HepG2 (cell line): ENCODE measurements at regions of chr14 and their contacts with region 1.

Region 1: GRCh38 chr14:93115069-93115820 is 480 bp downstream of the ITPK1 start:
- DNase-seq: peak; percentile 63
- ATAC-seq: peak; percentile 85
- H3K4me3 ChIP-seq: peak overlapping the region; percentile 81 to 92 (median 87)
- H3K27ac ChIP-seq: peak overlapping the region; percentile 66
- H3K4me1 ChIP-seq: peaks cover 38% of the 10 kb centered on the region
- H3K27me3 ChIP-seq: no peaks in the 10 kb centered on the region; a peak in 1 of 5 replicates
- CTCF ChIP-seq: peak; percentile 26; the same call in 1 of the 2 replicates
- EP300 ChIP-seq: no peak
- POLR2A ChIP-seq: peak in 1 of 2 experiments; percentile 27; a peak in 1 of 4 replicates
- RAD21 ChIP-seq: no peak

Region 2: GRCh38 chr14:92951912-92952471 is 163.3 kb before region 1 on chr14:
- CTCF ChIA-PET with region 1: interaction called, 6 read pairs
- POLR2A ChIA-PET with region 1: no interaction called
- in situ Hi-C with region 1: loop called (anchors 10 kb)
- intact Hi-C with region 1: loop called (anchors 1 kb)
- DNase-seq: peak; percentile 37
- ATAC-seq: peak; percentile 92
- H3K4me3 ChIP-seq: no peak overlapping the region
- H3K27ac ChIP-seq: no peak overlapping the region
- H3K4me1 ChIP-seq: no peaks in the 10 kb centered on the region
- H3K27me3 ChIP-seq: no peaks in the 10 kb centered on the region; a peak in 1 of 5 replicates
- CTCF ChIP-seq: peak; percentile 97
- EP300 ChIP-seq: no peak
- POLR2A ChIP-seq: no peak
- RAD21 ChIP-seq: peak; percentile 97

Region 3: DNA sequence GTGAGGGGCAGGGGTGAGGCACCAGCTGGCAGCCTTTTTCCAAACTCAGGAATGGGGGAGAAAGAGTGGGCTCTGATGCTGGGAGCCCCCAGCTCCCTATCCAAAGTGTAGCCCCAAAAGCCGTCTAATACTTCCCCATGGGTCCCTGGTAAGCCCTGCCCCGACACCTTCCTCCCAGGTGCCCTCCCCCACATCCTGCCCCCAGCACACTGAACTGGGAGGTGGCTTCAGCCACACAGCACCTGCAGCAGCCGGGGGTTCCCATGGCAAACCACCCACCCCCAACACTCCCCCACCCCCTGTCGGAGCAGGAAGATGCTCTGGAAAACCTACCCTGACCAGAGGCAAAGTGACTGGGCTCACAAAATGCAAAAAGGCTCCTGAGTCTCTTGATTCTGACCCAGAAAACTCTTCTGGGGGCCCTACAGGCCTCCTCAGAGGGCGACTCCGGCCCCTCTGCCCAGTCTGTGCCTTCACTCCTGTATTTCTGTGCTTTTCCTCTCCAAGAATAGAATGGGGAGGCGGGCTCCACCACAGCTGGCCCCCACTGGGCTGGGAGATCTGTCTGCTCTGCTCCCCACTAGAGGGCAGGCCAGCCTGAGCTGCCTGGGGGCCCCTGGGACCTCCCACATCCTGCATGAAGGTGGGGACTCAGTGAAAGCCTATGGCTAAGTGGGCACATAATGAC is 81.1 kb before region 1 on chr14:
- CTCF ChIA-PET with region 1: no interaction called
- POLR2A ChIA-PET with region 1: interaction called, 3 read pairs
- in situ Hi-C with region 1: no loop called
- intact Hi-C with region 1: loop called (anchors 10 kb)
- DNase-seq: no peak
- ATAC-seq: peak; percentile 27
- H3K4me3 ChIP-seq: no peak overlapping the region
- H3K27ac ChIP-seq: no peak overlapping the region
- H3K4me1 ChIP-seq: peaks cover 82% of the 10 kb centered on the region
- H3K27me3 ChIP-seq: no peaks in the 10 kb centered on the region
- CTCF ChIP-seq: peak; percentile 70
- EP300 ChIP-seq: no peak
- POLR2A ChIP-seq: no peak
- RAD21 ChIP-seq: peak; percentile 29; the same call in 1 of the 2 replicates

Region 4: GRCh38 chr14:93086441-93087055 is 28.7 kb before region 1 on chr14:
- CTCF ChIA-PET with region 1: no interaction called
- POLR2A ChIA-PET with region 1: no interaction called
- in situ Hi-C with region 1: no loop called
- intact Hi-C with region 1: no loop called
- DNase-seq: no peak
- ATAC-seq: no peak
- H3K4me3 ChIP-seq: no peak overlapping the region
- H3K27ac ChIP-seq: no peak overlapping the region
- H3K4me1 ChIP-seq: peaks cover 21% of the 10 kb centered on the region
- H3K27me3 ChIP-seq: no peaks in the 10 kb centered on the region
- CTCF ChIP-seq: no peak
- EP300 ChIP-seq: no peak
- POLR2A ChIP-seq: no peak
- RAD21 ChIP-seq: no peak

Region 5: GRCh38 chr14:93137864-93138263 is 22.6 kb after region 1 on chr14:
- CTCF ChIA-PET with region 1: interaction called, 29 read pairs
- POLR2A ChIA-PET with region 1: interaction called, 6 read pairs
- in situ Hi-C with region 1: no loop called
- intact Hi-C with region 1: loop called (anchors 1 kb)
- DNase-seq: peak; percentile 56
- ATAC-seq: peak; percentile 75
- H3K4me3 ChIP-seq: no peak overlapping the region; a peak in 1 of 6 replicates
- H3K27ac ChIP-seq: no peak overlapping the region
- H3K4me1 ChIP-seq: peaks cover 48% of the 10 kb centered on the region
- H3K27me3 ChIP-seq: no peaks in the 10 kb centered on the region; a peak in 1 of 5 replicates
- CTCF ChIP-seq: peak; percentile 35; the same call in 1 of the 2 replicates
- EP300 ChIP-seq: no peak
- POLR2A ChIP-seq: no peak
- RAD21 ChIP-seq: no peak

Region 6: DNA sequence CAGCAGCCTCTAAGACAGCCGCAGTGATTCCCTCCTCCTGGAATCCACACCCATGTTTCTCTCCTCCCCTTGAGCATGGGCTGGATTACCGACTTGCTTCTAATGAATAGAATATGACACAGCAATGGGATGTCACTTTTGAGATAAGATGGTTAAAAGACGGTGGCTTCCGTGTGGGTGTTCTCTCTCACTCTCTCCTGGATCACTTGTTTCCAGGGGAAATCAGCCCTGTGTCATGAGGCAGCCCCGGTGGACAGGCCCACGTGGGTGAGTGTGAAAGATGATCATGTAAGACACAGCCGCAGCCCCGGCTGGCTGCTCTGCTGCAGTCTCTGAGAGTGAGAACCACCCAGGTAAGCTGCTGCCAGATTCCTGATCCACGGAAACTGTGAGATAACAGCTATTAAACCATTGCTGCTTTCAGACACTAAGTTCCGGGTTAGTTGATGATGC is 58.7 kb after region 1 on chr14:
- CTCF ChIA-PET with region 1: interaction called, 7 read pairs
- POLR2A ChIA-PET with region 1: no interaction called
- in situ Hi-C with region 1: no loop called
- intact Hi-C with region 1: loop called (anchors 10 kb)
- DNase-seq: no peak
- ATAC-seq: peak; percentile 60
- H3K4me3 ChIP-seq: peak overlapping the region in 1 of 3 experiments; percentile 31; a peak in 1 of 6 replicates
- H3K27ac ChIP-seq: no peak overlapping the region
- H3K4me1 ChIP-seq: peaks cover 79% of the 10 kb centered on the region
- H3K27me3 ChIP-seq: no peaks in the 10 kb centered on the region
- CTCF ChIP-seq: no peak
- EP300 ChIP-seq: no peak
- POLR2A ChIP-seq: no peak
- RAD21 ChIP-seq: no peak

Region 7: DNA sequence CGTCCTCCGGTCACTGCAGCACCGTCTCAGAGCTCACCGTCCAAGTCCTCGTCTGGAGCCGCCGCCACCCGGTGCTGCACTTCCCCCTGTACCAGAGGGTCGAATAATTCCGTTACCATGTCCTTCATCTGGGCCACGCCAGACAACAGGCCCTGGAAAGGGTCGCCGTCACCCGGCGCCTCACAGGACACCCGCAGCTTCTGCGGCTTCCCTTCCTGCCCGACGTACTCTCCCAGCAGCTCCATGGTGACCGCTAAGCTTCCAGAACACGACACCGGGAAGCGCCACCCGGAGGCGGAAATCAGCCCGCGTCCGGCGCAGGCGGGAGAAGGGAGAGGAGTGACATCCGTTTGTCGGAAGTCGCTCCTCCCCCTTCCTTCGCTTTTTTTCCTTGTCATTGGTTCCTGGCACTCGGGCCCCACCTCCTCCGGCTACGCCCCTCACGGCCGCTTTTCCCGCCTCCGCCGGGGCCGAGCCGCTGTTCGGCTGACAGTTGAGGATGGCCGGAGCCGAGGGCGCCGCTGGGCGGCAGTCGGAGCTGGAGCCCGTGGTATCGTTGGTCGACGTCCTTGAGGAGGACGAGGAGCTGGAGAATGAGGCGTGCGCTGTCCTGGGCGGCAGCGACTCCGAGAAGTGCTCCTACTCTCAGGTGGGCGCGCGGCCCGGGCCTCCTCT is 91.7 kb after region 1 on chr14 and contains the starts of genes GON7 and UBR7:
- CTCF ChIA-PET with region 1: interaction called, 3 read pairs
- POLR2A ChIA-PET with region 1: no interaction called
- in situ Hi-C with region 1: no loop called
- intact Hi-C with region 1: loop called (anchors 5 kb)
- DNase-seq: peak; percentile 96
- ATAC-seq: peak; percentile 96
- H3K4me3 ChIP-seq: peak within 1 kb of the TSS; percentile 77 to 98 (median 92)
- H3K27ac ChIP-seq: peak within 1 kb of the TSS; percentile 87
- H3K4me1 ChIP-seq: peaks cover 29% of the 10 kb centered on the region
- H3K27me3 ChIP-seq: no peaks in the 10 kb centered on the region; a peak in 1 of 5 replicates
- CTCF ChIP-seq: peak; percentile 74
- EP300 ChIP-seq: 0 out of 4 replicates have a peak, but pooled peaks of 1 of the 2 experiments have one; percentile 17
- POLR2A ChIP-seq: peak; percentile 76 to 82
- RAD21 ChIP-seq: peak; percentile 11; the same call in 1 of the 2 replicates
- total RNA-seq, gene GON7: 28.0 and 45.9 TPM in 2 replicates
- total RNA-seq, gene UBR7: 19.7 and 35.5 TPM in 2 replicates

Region 8: DNA sequence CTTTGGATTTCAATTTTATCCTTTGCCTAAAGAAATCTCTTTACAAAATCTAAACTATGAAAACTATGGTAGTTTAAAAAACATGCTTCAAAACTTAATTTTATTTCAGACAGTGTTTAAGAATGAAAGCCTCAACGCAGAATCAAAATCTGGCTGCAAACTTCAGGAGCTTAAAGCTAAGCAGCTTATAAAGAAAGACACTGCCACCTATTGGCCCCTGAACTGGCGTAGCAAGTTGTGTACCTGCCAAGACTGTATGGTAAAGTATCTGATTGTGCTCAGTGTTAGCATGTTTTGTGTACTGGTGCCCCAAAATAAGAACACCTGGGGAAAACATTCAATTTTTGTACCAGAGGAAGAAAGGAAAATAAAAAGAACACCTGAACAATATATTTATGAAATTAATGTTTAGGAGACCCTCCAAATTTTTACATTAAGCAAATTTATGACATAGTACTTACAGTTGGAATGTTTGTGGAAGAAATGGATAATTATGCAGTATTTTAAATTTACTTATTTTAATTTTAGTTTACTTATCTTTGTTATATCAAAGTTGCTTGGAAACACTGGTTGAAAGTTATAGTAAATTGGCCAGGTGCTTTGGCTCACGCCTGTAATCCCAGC is 104.0 kb after region 1 on chr14:
- CTCF ChIA-PET with region 1: interaction called, 11 read pairs
- POLR2A ChIA-PET with region 1: interaction called, 3 read pairs
- in situ Hi-C with region 1: no loop called
- intact Hi-C with region 1: no loop called
- DNase-seq: peak; percentile 67
- ATAC-seq: peak; percentile 85
- H3K4me3 ChIP-seq: no peak overlapping the region
- H3K27ac ChIP-seq: no peak overlapping the region
- H3K4me1 ChIP-seq: no peaks in the 10 kb centered on the region
- H3K27me3 ChIP-seq: no peaks in the 10 kb centered on the region
- CTCF ChIP-seq: peak; percentile 75
- EP300 ChIP-seq: no peak
- POLR2A ChIP-seq: no peak
- RAD21 ChIP-seq: peak; percentile 30; the same call in 1 of the 2 replicates

Region 9: GRCh38 chr14:93332853-93333630 is 217.8 kb after region 1 on chr14 and contains the start of gene BTBD7:
- CTCF ChIA-PET with region 1: no interaction called
- POLR2A ChIA-PET with region 1: no interaction called
- in situ Hi-C with region 1: no loop called
- intact Hi-C with region 1: no loop called
- DNase-seq: peak; percentile 90
- ATAC-seq: peak; percentile 86
- H3K4me3 ChIP-seq: peak within 1 kb of the TSS; percentile 77 to 81 (median 79)
- H3K27ac ChIP-seq: peak within 1 kb of the TSS; percentile 84
- H3K4me1 ChIP-seq: peaks cover 48% of the 10 kb centered on the region
- H3K27me3 ChIP-seq: no peaks in the 10 kb centered on the region; a peak in 1 of 5 replicates
- CTCF ChIP-seq: peak; percentile 9; the same call in 1 of the 2 replicates
- EP300 ChIP-seq: no peak
- POLR2A ChIP-seq: peak in 1 of 2 experiments; percentile 75; a peak in 2 of 4 replicates
- RAD21 ChIP-seq: no peak; the same call in 1 of the 2 replicates
- total RNA-seq, gene BTBD7: 15.2 and 19.9 TPM in 2 replicates